ENCODE measurements at regions of chr11 and their contacts with region 1.

Region 1: GRCh38 chr11:69296890-69297786 is 3.2 kb downstream of the MYEOV start:
- DNase-seq: peak; percentile 94 to 97 (median 95)
- ATAC-seq: peak; percentile 49 to 89 (median 82)
- H3K4me3 ChIP-seq: peak overlapping the region in 9 of 12 donors; percentile 6 to 43 (median 30)
- H3K27ac ChIP-seq: peak overlapping the region in 11 of 12 donors; percentile 70 to 94 (median 81)
- H3K4me1 ChIP-seq: peaks cover 15 to 90% (median 47%) of the 10 kb centered on the region in 12 donors
- H3K27me3 ChIP-seq: no peaks in the 10 kb centered on the region
- CTCF ChIP-seq: no peak
- POLR2A ChIP-seq: no peak

Region 2: DNA sequence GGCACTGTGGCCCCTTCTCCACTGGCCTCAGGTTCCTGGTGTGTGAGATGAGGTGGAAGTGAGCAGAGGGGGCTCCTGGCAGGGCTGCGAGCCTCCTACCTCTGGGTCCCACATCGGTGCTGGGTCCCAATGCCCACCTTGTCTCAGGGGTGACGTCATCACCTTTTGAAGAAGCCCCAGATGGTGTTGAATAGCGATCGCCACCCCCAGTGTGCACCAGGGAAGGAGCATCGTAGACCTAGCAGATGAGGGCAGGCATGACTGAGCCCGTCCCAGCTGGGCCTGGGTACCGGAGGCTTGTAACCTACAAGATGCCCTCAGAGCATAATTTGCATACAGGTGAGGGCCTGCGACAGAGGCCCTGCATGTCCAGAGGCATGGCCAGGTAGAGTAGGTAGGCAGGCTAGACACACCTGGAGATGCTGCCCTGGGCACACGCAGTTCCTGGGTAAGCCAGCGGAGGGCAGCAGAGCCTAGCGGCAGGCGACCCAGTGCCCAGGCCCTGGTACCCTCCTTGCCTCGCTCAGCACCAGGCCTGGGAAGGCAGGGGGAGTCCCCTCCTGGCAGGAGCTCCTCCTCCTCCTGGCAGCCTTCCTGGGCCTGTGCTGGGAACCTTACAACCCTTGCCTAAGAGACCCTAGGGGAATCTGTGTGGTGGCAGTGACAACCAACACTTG is 195.9 kb before region 1 on chr11:
- intact Hi-C with region 1: loop called in 2 of 10 experiments (anchors 10 kb)
- DNase-seq: peak; percentile 64 to 85 (median 81)
- ATAC-seq: peak; percentile 72 to 86 (median 83)
- H3K4me3 ChIP-seq: no peak overlapping the region
- H3K27ac ChIP-seq: no peak overlapping the region
- H3K4me1 ChIP-seq: peaks cover 0 to 20% (median 9%) of the 10 kb centered on the region in 12 donors
- H3K27me3 ChIP-seq: no peaks in the 10 kb centered on the region
- CTCF ChIP-seq: peak; percentile 96 to 100 (median 100)
- POLR2A ChIP-seq: no peak

Region 3: GRCh38 chr11:69131644-69132300 is 165.4 kb before region 1 on chr11:
- intact Hi-C with region 1: loop called in 4 of 10 experiments (anchors 5 to 10 kb)
- DNase-seq: peak in 4 of 5 donors; percentile 63 to 81 (median 70)
- ATAC-seq: peak; percentile 75 to 86 (median 81)
- H3K4me3 ChIP-seq: no peak overlapping the region
- H3K27ac ChIP-seq: peak overlapping the region in 8 of 12 donors; percentile 1 to 68 (median 41)
- H3K4me1 ChIP-seq: peaks cover 0 to 20% (median 14%) of the 10 kb centered on the region in 12 donors
- H3K27me3 ChIP-seq: no peaks in the 10 kb centered on the region
- CTCF ChIP-seq: peak; percentile 63 to 89 (median 85)
- POLR2A ChIP-seq: no peak

Region 4: DNA sequence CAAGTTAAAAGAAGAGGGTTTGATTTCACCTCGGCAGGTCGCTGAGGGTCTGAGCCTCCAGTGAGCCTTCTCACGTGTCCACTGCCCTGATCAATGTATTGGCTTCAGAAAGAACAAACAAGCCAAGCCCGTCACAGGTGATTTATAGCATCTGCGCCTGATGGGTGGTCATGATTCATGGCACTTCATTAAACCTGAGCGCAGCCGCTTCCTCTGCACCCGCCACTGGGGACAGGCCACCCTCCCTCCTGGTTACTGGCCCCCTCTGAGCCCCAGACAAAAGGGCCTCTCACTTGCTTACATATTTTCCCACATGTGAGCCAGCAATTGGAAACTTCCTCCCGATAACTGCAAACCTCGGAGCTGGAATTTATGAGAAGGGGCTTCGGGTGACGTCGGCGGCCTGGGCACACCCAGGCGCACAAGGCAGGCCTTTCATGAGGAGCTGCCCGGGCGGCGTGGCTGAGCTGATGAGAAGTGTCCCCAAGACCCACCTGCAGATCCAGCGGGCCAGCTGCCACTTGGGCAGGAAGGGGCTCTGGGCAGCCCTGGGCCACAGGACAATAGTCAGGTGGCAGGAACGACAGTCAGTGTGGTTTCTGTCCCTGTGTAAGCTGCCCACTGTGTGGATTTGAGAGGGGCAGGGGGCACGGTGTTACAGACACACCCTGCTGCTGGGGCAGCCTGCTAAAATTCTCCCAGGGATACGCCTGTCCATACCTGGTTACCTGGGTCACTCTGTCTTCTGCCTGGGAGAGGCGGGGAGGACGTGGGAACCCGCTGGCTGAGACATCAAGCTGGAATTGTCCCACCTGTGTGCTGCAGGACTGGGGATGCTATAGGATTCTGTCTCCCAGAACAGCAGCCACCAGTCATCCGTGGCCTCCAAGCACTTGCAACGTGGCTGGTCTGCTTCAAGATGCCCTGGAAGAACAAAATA is 120.3 kb after region 1 on chr11:
- intact Hi-C with region 1: loop called in 1 of 10 experiments (anchors 10 kb)
- DNase-seq: peak in 1 of 5 donors; percentile 28
- ATAC-seq: no peak
- H3K4me3 ChIP-seq: no peak overlapping the region
- H3K27ac ChIP-seq: peak overlapping the region; percentile 52 to 91 (median 72)
- H3K4me1 ChIP-seq: peaks cover 5 to 51% (median 35%) of the 10 kb centered on the region in 12 donors
- H3K27me3 ChIP-seq: no peaks in the 10 kb centered on the region
- CTCF ChIP-seq: no peak
- POLR2A ChIP-seq: no peak

Region 5: GRCh38 chr11:69449320-69450063 is 152.4 kb after region 1 on chr11:
- intact Hi-C with region 1: loop called in 8 of 10 experiments (anchors 1 to 10 kb)
- DNase-seq: peak; percentile 80 to 91 (median 88)
- ATAC-seq: peak; percentile 55 to 83 (median 78)
- H3K4me3 ChIP-seq: peak overlapping the region in 2 of 12 donors; percentile 0 to 9
- H3K27ac ChIP-seq: peak overlapping the region in 11 of 12 donors; percentile 65 to 93 (median 80)
- H3K4me1 ChIP-seq: peaks cover 0 to 45% (median 31%) of the 10 kb centered on the region in 12 donors
- H3K27me3 ChIP-seq: no peaks in the 10 kb centered on the region
- CTCF ChIP-seq: peak in 1 of 12 donors; percentile 6
- POLR2A ChIP-seq: no peak

Measured in heart left ventricle (tissue), 16 donors.